Heart right ventricle (tissue), 16 donors: ENCODE measurements at regions of chr18 and their contacts with region 1.

Region 1: DNA sequence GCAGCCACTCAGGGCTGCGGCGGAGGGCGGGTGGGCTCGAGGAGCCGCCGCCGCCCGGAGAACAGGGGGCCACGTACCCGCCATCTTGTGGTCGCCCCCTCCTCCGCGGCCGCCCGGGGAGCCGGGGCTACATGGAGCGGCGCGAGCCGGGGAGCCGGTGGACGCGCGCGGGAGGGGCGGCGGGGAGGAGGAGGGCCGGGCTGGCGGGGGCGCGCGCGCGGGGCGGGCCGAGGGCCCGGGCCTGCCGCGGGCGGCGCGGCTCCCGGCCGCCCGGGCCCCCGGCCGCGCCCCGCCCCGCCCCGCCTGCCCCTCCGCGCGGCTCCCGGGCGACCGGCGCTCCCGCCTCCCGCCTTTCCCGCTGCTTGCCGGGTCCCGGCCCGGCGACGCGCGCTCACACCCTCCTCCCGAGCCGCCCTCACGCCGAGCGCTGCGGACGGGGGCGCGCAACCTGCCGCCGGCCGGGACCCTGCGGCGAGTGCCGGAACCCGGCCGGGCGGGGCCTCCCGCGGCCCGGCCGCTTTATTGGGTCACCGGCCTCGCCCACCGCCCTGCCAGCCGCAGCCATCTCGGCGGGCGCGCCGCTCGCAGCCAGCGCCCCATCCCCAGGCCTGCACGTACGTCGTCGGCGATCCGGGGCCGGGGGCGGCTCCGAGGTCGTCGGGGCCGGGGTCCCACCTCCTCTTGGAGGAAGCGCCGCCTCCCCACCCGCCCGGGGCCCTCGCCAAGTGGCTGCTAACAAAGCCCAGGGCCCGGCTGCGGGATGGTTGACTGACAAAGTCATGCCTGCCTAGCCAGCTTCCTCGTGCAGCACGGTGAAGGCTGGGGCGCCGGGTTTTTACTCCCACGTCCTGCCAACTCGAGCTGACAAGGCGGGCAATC is at the start of gene PPP4R1:
- DNase-seq: peak; percentile 75 to 83
- ATAC-seq: peak; percentile 62 to 88 (median 77)
- H3K4me3 ChIP-seq: peak within 1 kb of the TSS; percentile 64 to 91 (median 86)
- H3K27ac ChIP-seq: peak within 1 kb of the TSS; percentile 93 to 99 (median 97)
- H3K4me1 ChIP-seq: peaks cover 3 to 52% (median 31%) of the 10 kb centered on the region in 9 donors
- H3K27me3 ChIP-seq: no peaks in the 10 kb centered on the region
- CTCF ChIP-seq: no peak
- total RNA-seq, gene PPP4R1: 56.8 to 87.4 (median 62.6) TPM

Region 2: GRCh38 chr18:9437021-9437437 is 177.6 kb before region 1 on chr18:
- intact Hi-C with region 1: no loop called
- DNase-seq: peak in 1 of 2 donors; percentile 14
- ATAC-seq: peak in 4 of 8 donors; percentile 62 to 63 (median 63)
- H3K4me3 ChIP-seq: no peak overlapping the region
- H3K27ac ChIP-seq: peak overlapping the region in 4 of 10 donors; percentile 9 to 50 (median 40)
- H3K4me1 ChIP-seq: peaks cover 0 to 23% (median 4%) of the 10 kb centered on the region in 9 donors
- H3K27me3 ChIP-seq: no peaks in the 10 kb centered on the region
- CTCF ChIP-seq: no peak

Region 3: GRCh38 chr18:9661564-9661963 is 46.9 kb after region 1 on chr18:
- intact Hi-C with region 1: loop called in 1 of 10 experiments (anchors 5 kb)
- DNase-seq: no peak
- ATAC-seq: no peak
- H3K4me3 ChIP-seq: no peak overlapping the region
- H3K27ac ChIP-seq: no peak overlapping the region
- H3K4me1 ChIP-seq: no peaks in the 10 kb centered on the region
- H3K27me3 ChIP-seq: no peaks in the 10 kb centered on the region
- CTCF ChIP-seq: peak in 2 of 9 donors; percentile 27 to 28

Region 4: GRCh38 chr18:9683407-9684396 is 69.1 kb after region 1 on chr18:
- intact Hi-C with region 1: loop called in 2 of 10 experiments (anchors 5 to 10 kb)
- DNase-seq: peak in 1 of 2 donors; percentile 29
- ATAC-seq: peak; percentile 44 to 87 (median 70)
- H3K4me3 ChIP-seq: no peak overlapping the region
- H3K27ac ChIP-seq: peak overlapping the region in 8 of 10 donors; percentile 46 to 82 (median 70)
- H3K4me1 ChIP-seq: peaks cover 0 to 36% (median 22%) of the 10 kb centered on the region in 9 donors
- H3K27me3 ChIP-seq: no peaks in the 10 kb centered on the region
- CTCF ChIP-seq: peak in 7 of 9 donors; percentile 16 to 60 (median 52)

Region 5: DNA sequence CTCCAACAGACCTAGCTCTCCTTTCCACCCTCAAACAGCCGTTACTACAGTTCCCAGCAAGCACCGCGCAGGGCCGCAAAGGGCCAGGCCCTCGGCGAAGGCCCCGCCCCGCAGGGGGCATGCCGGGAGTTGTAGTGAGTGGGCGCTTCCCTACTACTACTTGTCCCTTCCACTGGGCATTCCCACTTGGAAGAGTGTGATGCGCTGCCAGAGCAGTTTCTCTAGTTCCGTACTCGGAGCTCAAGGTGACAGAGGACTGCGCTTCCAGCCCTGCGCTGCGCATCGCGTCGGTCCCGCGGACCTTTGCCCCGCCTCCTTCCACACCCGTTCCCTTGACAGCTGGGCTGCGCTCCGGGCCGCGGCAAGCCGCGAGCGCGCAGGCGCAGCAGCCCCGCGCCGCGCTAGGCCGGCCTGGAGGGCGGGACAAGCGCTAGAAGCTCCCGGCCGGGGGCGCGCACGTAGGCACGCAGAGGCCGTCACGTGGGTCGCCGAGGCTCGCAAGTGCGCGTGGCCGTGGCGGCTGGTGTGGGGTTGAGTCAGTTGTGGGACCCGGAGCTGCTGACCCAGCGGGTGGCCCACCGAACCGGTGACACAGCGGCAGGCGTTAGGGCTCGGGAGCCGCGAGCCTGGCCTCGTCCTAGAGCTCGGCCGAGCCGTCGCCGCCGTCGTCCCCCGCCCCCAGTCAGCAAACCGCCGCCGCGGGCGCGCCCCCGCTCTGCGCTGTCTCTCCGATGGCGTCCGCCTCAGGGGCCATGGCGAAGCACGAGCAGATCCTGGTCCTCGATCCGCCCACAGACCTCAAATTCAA is 299.1 kb after region 1 on chr18 and contains the start of gene VAPA:
- intact Hi-C with region 1: loop called in 2 of 10 experiments (anchors 10 kb)
- DNase-seq: peak; percentile 93 to 95
- ATAC-seq: peak; percentile 96 to 99 (median 96)
- H3K4me3 ChIP-seq: peak within 1 kb of the TSS; percentile 79 to 99 (median 94)
- H3K27ac ChIP-seq: peak within 1 kb of the TSS; percentile 91 to 100 (median 99)
- H3K4me1 ChIP-seq: peaks cover 2 to 58% (median 35%) of the 10 kb centered on the region in 9 donors
- H3K27me3 ChIP-seq: no peaks in the 10 kb centered on the region
- CTCF ChIP-seq: no peak
- total RNA-seq, gene VAPA: 202 to 269 (median 237) TPM